ENCODE measurements at regions of chr14 and their contacts with region 1.

Region 1: DNA sequence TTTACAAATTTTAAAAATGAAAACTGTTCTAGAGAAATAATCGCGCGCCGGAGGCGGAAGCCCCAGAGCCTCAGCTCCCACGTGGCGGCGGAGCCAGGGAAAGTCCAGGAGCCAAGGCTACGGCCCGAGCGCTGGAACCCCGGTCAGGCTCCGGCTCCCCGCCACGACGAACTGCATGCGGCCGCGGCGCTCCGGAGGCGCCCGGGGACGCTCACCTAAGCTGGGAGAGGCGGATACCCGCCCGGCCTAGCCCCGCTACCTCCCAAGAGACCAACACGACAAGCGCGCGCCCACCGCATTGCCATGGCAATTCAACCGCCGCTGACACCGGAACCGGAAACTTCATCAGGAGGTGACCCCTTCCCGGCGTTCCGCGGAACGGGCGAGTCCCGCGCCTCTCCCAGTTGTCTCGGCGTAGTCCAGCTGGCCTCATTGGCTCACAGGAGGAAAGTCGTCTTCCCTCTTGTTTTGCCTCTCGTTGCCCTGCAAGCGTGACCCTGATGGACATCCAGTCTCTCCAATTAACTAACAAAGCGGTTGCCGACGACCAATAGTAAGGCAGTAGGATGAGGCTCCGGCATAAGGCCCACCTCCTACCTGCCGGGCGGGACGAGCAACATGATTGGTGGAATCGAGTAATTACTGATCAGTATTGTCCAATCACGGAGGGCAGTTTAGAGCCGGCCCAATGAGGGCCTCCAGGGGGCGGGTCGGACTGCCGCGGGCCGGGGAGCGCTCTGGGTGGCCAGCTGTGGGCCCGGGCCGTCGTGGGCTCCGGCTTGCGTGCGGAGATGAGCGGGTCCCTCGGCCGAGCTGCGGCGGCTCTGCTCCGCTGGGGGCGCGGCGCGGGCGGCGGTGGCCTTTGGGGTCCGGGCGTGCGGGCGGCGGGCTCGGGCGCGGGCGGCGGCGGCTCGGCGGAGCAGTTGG is at the start of gene GLRX5:
- DNase-seq: peak; percentile 99
- H3K4me3 ChIP-seq: peak within 1 kb of the TSS; percentile 90 to 99 (median 96)
- H3K27ac ChIP-seq: peak within 1 kb of the TSS; percentile 94 to 98 (median 96)
- H3K4me1 ChIP-seq: peaks cover 21 to 58% (median 39%) of the 10 kb centered on the region in 4 donors
- H3K27me3 ChIP-seq: no peaks in the 10 kb centered on the region
- CTCF ChIP-seq: no peak
- EP300 ChIP-seq: no peak
- POLR2A ChIP-seq: peak; percentile 64
- total RNA-seq, gene GLRX5: 11.6 to 177 (median 38.2) TPM

Region 2: GRCh38 chr14:95140060-95140858 is 394.3 kb before region 1 on chr14:
- in situ Hi-C with region 1: loop called in 1 of 4 experiments (anchors 25 kb)
- intact Hi-C with region 1: no loop called
- DNase-seq: no peak
- H3K4me3 ChIP-seq: no peak overlapping the region
- H3K27ac ChIP-seq: peak overlapping the region in 3 of 4 donors; percentile 13 to 32 (median 14)
- H3K4me1 ChIP-seq: peaks cover 13 to 84% (median 61%) of the 10 kb centered on the region in 4 donors
- H3K27me3 ChIP-seq: no peaks in the 10 kb centered on the region
- CTCF ChIP-seq: no peak
- EP300 ChIP-seq: no peak
- POLR2A ChIP-seq: no peak